BJ (cell line): ENCODE measurements at regions of chr6 and their contacts with region 1.

Region 1: DNA sequence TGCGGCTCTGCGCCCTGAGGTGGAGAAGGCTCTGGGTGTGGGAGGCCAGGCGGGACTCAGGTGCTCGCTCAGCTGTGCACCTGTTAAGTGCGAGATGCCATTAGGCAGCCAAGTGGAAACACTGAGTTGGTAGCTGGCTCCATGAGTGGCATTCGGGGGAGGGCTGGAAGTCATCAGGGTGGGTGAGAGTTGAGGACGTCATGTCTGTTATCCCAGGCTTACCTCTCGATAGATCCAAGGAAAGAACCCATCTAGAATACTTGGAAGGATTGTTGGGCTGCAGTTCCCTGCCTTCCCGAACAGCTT is 41.3 kb downstream of the TAF8 start:
- DNase-seq: no peak
- H3K4me3 ChIP-seq: no peak overlapping the region
- H3K27me3 ChIP-seq: no peaks in the 10 kb centered on the region; the same call in 1 of the 2 replicates
- CTCF ChIP-seq: no peak

Region 2: DNA sequence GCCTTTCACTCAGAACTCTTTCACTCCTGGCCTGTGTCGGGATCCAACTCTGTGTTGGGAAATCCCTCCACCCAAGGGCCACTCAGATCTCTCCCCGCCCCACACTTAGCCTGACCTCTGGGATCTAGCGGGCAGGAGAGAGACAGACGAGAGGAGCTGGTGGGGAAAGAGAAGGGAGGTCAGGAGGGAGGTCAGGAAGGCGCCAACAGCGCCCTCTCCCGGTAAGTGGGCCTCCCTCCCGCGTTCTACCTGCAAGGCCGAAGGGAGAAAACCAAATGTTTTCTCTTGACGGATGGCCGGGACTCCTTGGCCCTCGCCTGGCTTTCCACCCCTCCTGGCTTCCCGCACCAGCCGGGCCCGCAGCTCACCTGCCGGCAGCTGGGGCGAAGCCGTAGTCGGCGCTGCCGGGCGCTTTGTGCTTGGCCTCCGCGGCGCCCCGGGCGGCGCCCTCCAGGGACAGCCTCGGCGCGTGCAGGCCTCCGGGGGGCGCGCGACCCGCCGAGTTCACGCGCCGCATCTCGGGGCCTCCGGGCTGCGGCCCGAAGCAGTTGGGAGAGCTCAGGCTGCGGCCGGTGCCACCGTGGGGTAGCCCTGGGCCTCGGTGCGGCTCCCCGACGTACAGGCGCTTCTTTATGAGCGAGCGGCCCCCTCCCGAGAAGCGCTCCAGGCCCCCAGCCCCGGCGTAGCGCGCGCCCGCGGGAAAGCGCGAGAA is 12.6 kb after region 1 on chr6:
- CTCF ChIA-PET with region 1: interaction called, 13 read pairs
- POLR2A ChIA-PET with region 1: no interaction called
- DNase-seq: no peak
- H3K4me3 ChIP-seq: no peak overlapping the region
- H3K27me3 ChIP-seq: peaks cover 5% of the 10 kb centered on the region
- CTCF ChIP-seq: peak; percentile 65

Region 3: DNA sequence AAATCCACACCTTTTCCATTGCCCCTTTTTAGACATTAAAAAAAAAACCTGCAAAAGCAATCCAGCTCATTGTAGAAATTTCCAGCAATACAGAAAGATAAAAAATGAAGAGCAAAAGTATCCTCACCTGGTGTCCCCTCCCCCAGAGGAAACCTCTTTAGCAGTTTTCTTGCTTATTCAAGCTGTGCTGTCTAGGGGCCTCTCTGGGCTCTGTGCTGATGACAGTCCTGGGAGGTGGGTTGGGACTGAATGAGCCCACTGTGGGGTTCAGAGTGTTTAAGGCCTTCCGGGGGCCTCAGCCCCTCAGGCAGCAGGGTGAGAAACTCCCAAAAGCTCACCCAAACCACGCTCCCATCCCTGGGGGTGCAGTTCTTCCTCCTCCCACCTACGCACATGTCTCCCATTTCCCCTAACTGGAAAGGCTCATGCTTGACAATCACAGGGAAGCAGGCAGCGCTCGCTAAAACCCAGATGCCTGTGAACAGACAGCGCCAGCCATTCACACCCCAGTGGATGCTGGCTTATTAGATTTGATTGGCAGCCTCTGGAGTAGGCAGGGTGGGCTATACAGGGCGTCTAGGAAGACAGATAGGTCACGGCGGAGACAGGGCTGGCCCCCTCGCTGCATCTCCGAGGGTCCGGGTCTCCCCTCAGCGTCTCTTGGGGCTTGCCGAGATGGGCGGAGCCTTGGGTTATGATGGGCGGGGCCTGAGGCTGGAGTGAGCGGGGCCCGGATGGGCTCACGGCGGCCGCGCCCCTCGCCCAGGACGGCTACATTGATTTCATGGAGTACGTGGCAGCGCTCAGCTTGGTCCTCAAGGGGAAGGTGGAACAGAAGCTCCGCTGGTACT is 86.1 kb after region 1 on chr6:
- CTCF ChIA-PET with region 1: no interaction called
- POLR2A ChIA-PET with region 1: no interaction called
- DNase-seq: no peak
- H3K4me3 ChIP-seq: no peak overlapping the region
- H3K27me3 ChIP-seq: no peaks in the 10 kb centered on the region
- CTCF ChIP-seq: no peak